ENCODE measurements at regions of chr17 and their contacts with region 1.

Region 1: GRCh38 chr17:35063514-35064223 is at the start of gene RFFL:
- DNase-seq: peak; percentile 96
- ATAC-seq: peak; percentile 98
- H3K4me3 Mint-ChIP-seq: peak within 1 kb of the TSS; percentile 22
- H3K27ac Mint-ChIP-seq: peak within 1 kb of the TSS; percentile 87
- H3K4me1 Mint-ChIP-seq: peaks cover 51% of the 10 kb centered on the region
- H3K27me3 Mint-ChIP-seq: no peaks in the 10 kb centered on the region
- CTCF ChIP-seq: no peak
- total RNA-seq, gene RFFL: 11.3 to 12.0 TPM

Region 2: DNA sequence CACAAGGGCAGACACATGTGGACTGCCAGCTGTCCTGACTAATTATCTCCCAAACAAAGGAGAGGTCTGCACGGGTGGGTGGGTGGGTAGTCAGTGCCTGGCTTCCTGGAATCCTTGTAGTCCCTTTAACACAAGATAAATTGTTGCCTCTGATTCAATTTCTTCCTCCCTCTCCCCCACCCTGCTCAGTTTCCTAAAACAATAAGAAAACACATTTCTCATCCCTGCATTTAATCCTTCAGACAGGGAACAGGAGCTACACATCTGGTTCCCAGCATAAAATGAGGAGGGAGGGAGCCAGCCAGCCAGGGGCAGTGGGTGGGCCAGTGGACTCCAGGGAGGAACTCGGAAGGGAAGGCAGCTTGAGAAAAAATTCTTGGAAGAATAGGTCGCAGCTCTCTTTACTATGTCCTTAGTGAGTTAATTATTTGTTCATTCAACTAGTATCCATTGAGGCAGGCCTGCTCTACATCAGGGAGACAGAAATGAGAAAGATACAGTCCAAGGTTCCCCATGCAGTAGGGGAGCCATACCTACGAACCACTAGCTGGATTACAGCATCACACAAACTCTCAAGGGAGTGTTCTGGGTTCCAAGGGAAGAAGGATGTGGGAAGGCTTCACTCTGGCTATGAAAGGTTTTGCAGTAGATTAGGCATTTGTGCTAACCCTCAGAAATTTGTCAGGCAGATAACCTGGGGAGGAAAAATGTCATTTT is 160.7 kb before region 1 on chr17:
- CTCF ChIA-PET with region 1: no interaction called
- POLR2A ChIA-PET with region 1: no interaction called
- intact Hi-C with region 1: no loop called
- DNase-seq: no peak
- ATAC-seq: no peak
- H3K4me3 Mint-ChIP-seq: no peak overlapping the region
- H3K27ac Mint-ChIP-seq: no peak overlapping the region
- H3K4me1 Mint-ChIP-seq: no peaks in the 10 kb centered on the region
- H3K27me3 Mint-ChIP-seq: peaks cover 16% of the 10 kb centered on the region
- CTCF ChIP-seq: no peak

Region 3: GRCh38 chr17:34980681-34981537 is 82.8 kb before region 1 on chr17:
- CTCF ChIA-PET with region 1: no interaction called
- POLR2A ChIA-PET with region 1: interaction called, 7 read pairs
- intact Hi-C with region 1: loop called (anchors 5 kb)
- DNase-seq: peak; percentile 84
- ATAC-seq: peak; percentile 87
- H3K4me3 Mint-ChIP-seq: peak overlapping the region; percentile 94
- H3K27ac Mint-ChIP-seq: peak overlapping the region; percentile 89
- H3K4me1 Mint-ChIP-seq: peaks cover 45% of the 10 kb centered on the region
- H3K27me3 Mint-ChIP-seq: no peaks in the 10 kb centered on the region
- CTCF ChIP-seq: peak; percentile 47

Region 4: GRCh38 chr17:35022536-35023063 is 41.1 kb before region 1 on chr17:
- CTCF ChIA-PET with region 1: interaction called, 10 read pairs
- POLR2A ChIA-PET with region 1: interaction called, 8 read pairs
- intact Hi-C with region 1: no loop called
- DNase-seq: peak; percentile 88
- ATAC-seq: peak; percentile 100
- H3K4me3 Mint-ChIP-seq: peak overlapping the region; percentile 74
- H3K27ac Mint-ChIP-seq: peak overlapping the region; percentile 99
- H3K4me1 Mint-ChIP-seq: peaks cover 48% of the 10 kb centered on the region
- H3K27me3 Mint-ChIP-seq: no peaks in the 10 kb centered on the region
- CTCF ChIP-seq: no peak

Region 5: DNA sequence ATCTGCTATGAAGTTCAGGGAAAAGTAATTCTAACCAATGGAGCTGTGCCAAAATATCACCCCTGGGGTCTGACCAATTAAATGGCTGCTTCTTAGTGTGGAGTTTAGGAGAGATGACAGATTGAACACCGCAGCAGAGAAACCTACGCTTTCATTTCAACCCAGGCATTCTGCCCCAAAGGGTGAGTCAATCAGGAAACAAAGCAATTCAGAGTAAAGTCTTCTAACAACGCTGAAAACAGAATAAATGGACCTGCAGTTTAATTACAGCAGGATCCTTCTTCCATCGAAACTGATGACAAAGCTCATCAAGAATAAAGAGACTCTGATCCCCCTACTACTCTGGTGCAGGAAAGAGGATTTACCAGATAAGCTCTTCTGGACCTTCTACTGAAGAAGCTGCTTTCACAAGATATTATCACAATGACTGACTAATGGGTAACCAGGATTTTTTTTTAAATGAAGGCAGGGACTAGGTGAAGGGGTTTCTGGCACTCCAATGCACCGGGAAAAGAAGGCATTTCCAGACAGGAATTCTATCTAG is 16.9 kb before region 1 on chr17:
- CTCF ChIA-PET with region 1: interaction called, 8 read pairs
- POLR2A ChIA-PET with region 1: interaction called, 7 read pairs
- intact Hi-C with region 1: loop called (anchors 1 kb)
- DNase-seq: peak; percentile 82
- ATAC-seq: peak; percentile 93
- H3K4me3 Mint-ChIP-seq: peak overlapping the region; percentile 77
- H3K27ac Mint-ChIP-seq: peak overlapping the region; percentile 97
- H3K4me1 Mint-ChIP-seq: peaks cover 69% of the 10 kb centered on the region
- H3K27me3 Mint-ChIP-seq: no peaks in the 10 kb centered on the region
- CTCF ChIP-seq: no peak

Region 6: DNA sequence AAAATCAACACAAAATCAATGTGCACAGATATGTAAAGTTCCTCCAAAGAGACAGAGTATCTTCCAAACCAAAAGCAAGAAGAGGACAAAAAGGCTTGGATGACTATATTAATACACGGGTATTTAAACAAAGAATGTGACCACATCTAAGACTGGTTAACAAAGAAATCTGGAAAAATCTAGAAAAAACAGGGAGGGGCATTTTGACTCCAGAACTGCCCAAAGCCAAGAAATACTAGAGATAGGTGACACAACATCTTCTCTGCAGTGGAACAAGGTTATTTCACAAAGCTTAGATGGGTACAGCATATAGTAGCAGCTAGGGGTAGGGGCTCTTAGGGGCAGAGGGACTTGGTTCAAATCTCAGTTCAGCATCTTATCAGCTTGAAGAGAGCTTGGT is 10.5 kb before region 1 on chr17:
- CTCF ChIA-PET with region 1: interaction called, 10 read pairs
- POLR2A ChIA-PET with region 1: interaction called, 8 read pairs
- intact Hi-C with region 1: loop called (anchors 1 kb)
- DNase-seq: no peak
- ATAC-seq: no peak
- H3K4me3 Mint-ChIP-seq: no peak overlapping the region
- H3K27ac Mint-ChIP-seq: peak overlapping the region; percentile 88
- H3K4me1 Mint-ChIP-seq: peaks cover 69% of the 10 kb centered on the region
- H3K27me3 Mint-ChIP-seq: no peaks in the 10 kb centered on the region
- CTCF ChIP-seq: no peak

Region 7: DNA sequence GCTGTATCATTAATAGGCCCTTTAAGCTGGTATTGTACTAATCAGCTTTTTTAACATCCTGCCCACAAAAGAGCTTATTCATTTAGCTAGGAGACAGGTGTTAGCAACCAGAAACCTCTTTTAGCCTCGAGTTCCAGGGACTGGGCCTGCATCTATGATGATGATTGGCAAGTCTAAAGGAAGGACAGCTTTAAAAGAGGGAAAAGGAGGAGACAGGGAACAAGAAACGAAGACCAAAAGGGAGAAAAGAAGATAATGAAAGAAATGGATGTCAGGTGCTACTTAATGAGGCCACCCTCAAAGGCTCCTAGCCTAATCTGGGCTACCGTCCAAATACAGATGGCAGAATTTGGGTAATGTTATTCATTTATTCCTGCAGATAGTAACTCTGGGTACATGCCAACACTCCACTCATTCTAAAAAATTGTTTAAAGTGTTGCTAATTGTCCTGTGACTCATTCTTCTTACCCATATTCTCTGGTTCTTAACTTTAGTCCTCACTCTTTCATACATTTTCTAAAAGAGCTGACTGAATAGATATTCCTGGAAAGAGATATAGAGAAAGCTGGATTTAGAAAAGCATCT is 18.5 kb after region 1 on chr17:
- CTCF ChIA-PET with region 1: interaction called, 17 read pairs
- POLR2A ChIA-PET with region 1: interaction called, 12 read pairs
- intact Hi-C with region 1: no loop called
- DNase-seq: peak; percentile 21
- ATAC-seq: peak; percentile 60
- H3K4me3 Mint-ChIP-seq: peak overlapping the region; percentile 11
- H3K27ac Mint-ChIP-seq: peak overlapping the region; percentile 88
- H3K4me1 Mint-ChIP-seq: peaks cover 72% of the 10 kb centered on the region
- H3K27me3 Mint-ChIP-seq: no peaks in the 10 kb centered on the region
- CTCF ChIP-seq: no peak

Region 8: DNA sequence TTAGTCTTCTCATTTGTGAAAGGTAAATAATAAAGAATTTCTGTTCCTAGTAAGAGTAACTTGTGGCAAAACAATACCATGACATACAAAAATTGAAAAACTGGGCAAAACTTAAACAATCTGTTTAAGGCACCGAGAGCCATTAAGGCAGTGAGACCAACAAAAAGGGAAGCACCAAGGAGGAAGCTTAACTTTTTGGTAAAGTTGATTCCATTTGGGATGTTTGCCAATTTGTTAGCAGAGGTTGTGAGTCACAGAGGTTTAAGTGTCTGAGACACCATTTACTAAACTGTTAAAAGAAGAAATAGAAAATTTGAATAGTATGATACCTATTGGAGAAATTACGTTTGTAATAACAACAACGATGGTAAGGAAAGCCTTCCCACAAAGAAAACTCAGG is 125.6 kb after region 1 on chr17:
- CTCF ChIA-PET with region 1: no interaction called
- POLR2A ChIA-PET with region 1: no interaction called
- intact Hi-C with region 1: no loop called
- DNase-seq: no peak
- ATAC-seq: no peak
- H3K4me3 Mint-ChIP-seq: peak overlapping the region; percentile 65
- H3K27ac Mint-ChIP-seq: peak overlapping the region; percentile 76
- H3K4me1 Mint-ChIP-seq: peaks cover 65% of the 10 kb centered on the region
- H3K27me3 Mint-ChIP-seq: no peaks in the 10 kb centered on the region
- CTCF ChIP-seq: no peak